Activated naive CD8-positive, alpha-beta T cell treated with anti-CD3 and anti-CD28 coated beads, Interleukin-2, amount 10 ng/mL, durations not matched to agents 7 days and 5 days (primary cell): ENCODE measurements at regions of chr2 and their contacts with region 1.

Region 1: DNA sequence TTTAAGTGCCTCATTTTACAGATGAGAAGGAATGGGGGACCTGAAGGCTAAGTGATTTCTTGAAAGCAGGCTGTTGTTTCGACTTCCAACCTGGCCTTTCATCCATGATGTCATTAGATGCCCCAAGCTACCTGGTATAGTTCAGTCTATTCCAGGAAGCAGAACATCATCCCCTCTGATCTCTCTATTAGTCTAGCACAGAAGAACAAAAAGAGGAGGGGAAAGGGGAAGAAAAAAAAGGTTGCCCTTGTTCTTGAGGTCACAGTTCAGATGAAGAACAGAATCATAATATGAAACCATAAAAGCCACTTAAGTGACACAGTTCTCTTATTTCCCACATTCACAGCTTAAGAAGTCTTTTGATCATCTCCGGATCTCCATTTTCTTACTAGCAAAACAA is 386.2 kb upstream of the HNRNPA3 start:
- DNase-seq: no peak
- ATAC-seq: peak; percentile 94
- H3K4me3 Mint-ChIP-seq: peak overlapping the region; percentile 72
- H3K27ac Mint-ChIP-seq: peak overlapping the region; percentile 94
- H3K4me1 Mint-ChIP-seq: peaks cover 64% of the 10 kb centered on the region
- H3K27me3 Mint-ChIP-seq: no peaks in the 10 kb centered on the region

Region 2: DNA sequence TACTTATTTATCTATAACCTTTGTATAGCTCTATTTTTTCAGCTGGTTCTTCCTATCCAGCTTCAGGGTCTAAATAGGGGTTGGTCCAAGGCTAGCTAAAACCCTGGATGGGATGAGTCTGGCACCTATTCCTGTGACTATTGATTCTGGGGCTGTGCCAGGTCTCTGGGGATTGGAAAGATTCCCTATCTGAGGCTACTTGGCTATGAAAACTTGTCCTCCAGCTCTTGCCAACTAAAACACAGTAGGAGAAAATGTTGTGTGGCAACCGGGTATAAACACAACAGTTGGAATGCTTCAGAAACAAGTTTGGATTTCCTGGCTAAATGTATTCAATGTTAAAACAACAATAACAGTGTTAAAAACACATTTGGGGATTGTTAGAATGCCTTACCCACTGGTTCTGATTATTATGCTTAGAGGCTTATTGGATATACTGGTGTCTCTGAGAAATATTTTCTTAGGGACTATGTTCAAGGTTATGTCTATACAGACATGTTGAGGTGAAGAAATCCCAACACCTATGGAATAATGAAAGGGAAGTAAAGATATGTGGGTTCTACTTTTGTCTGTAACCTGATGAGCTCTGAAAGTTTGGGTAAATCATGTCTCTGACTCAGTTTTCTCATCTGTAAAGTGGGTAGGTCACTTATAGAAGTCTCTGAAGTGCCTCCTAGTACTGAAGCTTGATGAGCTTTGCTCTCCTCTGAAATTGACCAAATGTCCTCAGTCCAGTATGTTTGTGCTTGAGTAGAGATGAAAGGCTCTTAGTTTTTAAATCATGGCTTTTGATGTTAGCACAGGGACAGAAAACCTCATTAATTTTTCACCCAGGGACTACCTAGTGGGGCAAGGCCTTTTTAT is 96.4 kb before region 1 on chr2:
- POLR2A ChIA-PET with region 1: no interaction called
- DNase-seq: no peak
- ATAC-seq: no peak
- H3K4me3 Mint-ChIP-seq: no peak overlapping the region
- H3K27ac Mint-ChIP-seq: no peak overlapping the region
- H3K4me1 Mint-ChIP-seq: no peaks in the 10 kb centered on the region
- H3K27me3 Mint-ChIP-seq: no peaks in the 10 kb centered on the region

Region 3: DNA sequence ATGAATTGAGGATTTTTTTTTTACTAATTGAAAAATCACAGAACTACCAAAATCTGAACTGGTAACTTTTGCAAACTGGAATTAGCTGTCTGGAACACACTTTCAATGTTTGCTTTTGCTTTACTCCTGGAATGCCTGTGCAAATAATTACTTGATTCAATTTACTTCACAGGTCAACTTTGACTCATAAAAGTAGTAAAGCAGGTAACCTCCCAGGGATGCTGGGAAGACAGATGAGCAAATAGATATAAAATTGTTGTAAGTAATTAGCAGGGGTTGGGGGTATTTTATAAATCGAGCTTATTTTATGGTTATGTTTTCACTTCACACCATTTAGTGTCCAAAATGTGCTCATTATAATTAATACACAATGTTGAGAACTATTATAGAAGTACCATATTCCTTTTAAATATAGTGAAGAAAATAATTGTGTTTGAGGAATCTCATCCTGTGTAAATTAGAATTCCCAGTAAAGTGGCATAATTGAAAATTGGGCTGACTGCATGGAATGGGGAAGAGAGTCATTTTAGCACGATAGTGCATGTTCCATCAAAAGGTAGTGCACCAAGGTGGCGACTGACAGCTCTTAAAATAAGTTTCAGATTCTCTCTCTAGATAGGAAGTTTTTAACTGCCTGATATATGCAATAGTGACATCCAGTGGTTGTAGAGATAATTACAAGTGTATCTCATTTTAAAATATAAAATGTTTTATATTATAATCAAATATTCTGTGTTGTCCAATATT is 11.9 kb before region 1 on chr2:
- POLR2A ChIA-PET with region 1: interaction called, 12 read pairs
- DNase-seq: no peak
- ATAC-seq: peak; percentile 51
- H3K4me3 Mint-ChIP-seq: peak overlapping the region; percentile 66
- H3K27ac Mint-ChIP-seq: no peak overlapping the region
- H3K4me1 Mint-ChIP-seq: peaks cover 34% of the 10 kb centered on the region
- H3K27me3 Mint-ChIP-seq: no peaks in the 10 kb centered on the region